Activated naive CD4-positive, alpha-beta T cell treated with anti-CD3 and anti-CD28 coated beads for 36 hours (primary cell): ENCODE measurements at regions of chr11 and their contacts with region 1.

Region 1: DNA sequence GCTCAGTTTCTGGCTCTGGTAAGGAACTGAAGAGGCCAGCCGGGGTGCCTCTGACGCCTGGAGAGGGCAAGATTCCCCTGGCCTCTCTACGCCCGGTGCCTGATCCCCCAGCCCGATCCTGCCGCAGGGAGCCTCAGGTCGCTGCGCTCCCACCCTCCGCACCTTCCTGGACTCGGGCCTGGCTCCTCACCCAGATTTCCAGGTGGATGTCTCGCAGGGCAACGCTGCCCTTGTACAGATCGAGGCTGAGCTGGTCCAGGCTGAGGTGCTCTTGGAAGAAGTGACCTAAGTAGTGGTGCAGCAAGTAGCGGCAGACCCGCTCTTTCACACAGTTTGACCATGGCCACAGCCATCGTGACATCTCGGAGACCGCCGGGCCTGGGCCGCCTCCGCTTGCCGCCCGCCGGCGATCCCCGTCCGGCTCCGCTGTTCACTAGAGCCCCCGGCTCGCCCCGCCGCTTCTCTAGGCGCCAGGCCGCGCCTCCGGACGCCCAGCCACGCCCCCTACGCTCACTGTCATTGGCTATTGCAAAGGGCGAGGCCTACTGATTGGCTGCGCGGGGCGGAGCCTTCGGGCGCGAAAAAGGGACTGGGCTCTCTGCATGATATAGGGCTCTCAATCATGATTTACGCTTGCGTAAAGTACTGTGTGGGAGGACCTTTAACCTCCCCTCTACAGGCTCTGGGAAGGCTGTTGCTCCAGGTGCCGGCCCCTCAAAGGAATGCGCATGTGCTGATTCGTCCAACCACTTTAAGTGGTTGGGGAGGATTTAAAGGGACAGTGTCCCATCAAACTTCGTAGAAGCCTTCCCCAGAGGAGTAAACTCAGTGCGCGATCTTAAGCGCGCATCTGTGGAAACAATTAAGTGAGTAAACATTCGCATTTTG is at the start of gene ATG2A:
- DNase-seq: peak; percentile 99
- H3K4me3 Mint-ChIP-seq: peak within 1 kb of the TSS; percentile 87
- H3K27ac Mint-ChIP-seq: peak within 1 kb of the TSS; percentile 81
- H3K4me1 Mint-ChIP-seq: peaks cover 25% of the 10 kb centered on the region
- H3K27me3 Mint-ChIP-seq: no peaks in the 10 kb centered on the region
- total RNA-seq, gene ATG2A: 15.1 to 16.3 TPM

Region 2: DNA sequence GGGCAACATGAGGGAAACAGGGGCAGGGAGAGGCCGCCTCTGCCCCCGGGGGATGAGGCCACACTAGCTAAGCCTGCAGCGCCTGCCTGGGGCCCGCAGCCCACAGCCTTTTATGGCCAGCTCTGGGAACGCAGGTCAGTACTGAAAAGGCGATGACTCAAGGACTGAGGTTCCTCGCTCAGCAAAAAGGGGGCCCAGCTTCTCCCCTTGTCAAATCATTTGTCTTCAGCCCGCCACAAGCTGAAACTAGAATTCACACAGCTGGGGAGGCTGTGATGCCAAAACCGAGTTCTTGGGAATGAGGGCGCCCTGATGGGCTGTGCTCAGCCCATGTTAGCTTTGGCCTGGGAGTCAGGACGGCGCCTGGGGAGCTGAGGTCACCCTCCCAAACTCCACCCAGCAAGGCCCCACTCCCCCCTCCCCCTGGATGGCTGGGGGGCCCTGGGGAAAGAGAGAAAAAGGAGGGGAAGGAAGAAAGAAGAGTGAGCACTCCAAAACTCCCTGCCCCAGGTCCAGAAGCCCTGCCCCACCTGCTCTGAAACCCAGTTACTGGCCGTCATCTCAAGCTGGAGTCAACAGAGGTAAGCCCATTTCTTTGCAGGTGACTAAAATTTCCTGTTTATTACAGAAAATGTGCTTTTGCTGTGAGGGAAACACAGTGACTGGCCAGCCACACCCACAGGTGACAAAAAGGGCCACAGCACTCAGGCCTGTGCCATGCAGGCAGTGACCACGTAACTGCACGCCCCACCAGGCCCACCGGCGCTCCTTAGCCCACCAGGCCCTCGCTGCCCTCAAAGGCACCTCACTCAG is 52.3 kb before region 1 on chr11:
- CTCF ChIA-PET with region 1: interaction called, 3 read pairs
- intact Hi-C with region 1: loop called (anchors 2 kb)
- DNase-seq: peak; percentile 84
- H3K4me3 Mint-ChIP-seq: peak overlapping the region; percentile 56
- H3K27ac Mint-ChIP-seq: peak overlapping the region; percentile 97
- H3K4me1 Mint-ChIP-seq: peaks cover 95% of the 10 kb centered on the region
- H3K27me3 Mint-ChIP-seq: no peaks in the 10 kb centered on the region

Region 3: DNA sequence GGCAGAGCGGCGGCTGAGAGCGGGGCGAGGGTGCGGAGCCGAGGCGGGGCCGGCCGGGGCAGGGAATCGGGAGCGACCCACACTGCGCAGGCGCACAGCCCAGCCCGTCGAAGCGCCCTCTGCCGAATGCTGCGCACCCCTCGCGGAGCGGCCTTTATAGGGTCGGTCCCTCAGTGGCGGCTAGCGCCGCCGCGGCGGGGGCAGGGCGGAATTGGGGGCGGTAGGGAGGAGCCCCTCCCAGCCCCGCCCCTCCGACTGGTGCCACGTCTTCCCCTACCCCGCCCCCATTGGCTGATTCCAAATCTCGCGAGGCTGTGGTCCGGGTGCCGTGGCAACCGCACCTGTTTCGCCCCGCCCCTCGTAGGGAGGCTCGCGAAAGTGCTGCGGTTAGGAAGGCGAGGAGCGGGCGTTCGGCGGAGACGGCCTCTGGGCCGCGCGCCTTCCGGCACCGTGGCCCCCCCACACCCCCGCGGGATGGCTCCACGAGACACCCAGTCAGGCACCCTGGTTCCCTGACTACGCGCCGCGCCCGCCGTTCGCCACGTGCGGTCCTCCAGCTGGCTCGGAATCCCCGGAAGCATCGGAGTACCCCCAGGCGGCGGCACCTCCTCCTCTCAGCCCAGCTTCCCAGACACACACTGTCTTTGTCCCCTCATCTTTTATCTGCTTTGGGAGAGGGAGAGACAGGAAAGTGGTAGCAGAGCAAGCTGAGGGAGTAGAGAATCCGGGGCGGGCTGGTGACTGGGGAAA is 38.4 kb before region 1 on chr11 and contains the start of gene EHD1:
- CTCF ChIA-PET with region 1: no interaction called
- intact Hi-C with region 1: loop called (anchors 2 kb)
- DNase-seq: peak; percentile 100
- H3K4me3 Mint-ChIP-seq: peak within 1 kb of the TSS; percentile 93
- H3K27ac Mint-ChIP-seq: peak within 1 kb of the TSS; percentile 96
- H3K4me1 Mint-ChIP-seq: peaks cover 58% of the 10 kb centered on the region
- H3K27me3 Mint-ChIP-seq: no peaks in the 10 kb centered on the region
- total RNA-seq, gene EHD1: 124 to 132 TPM

Region 4: GRCh38 chr11:64971421-64972233 is 54.6 kb after region 1 on chr11 and contains the start of gene MAJIN:
- CTCF ChIA-PET with region 1: interaction called, 3 read pairs
- intact Hi-C with region 1: loop called (anchors 1 kb)
- DNase-seq: peak; percentile 89
- H3K4me3 Mint-ChIP-seq: peak within 1 kb of the TSS; percentile 69
- H3K27ac Mint-ChIP-seq: peak within 1 kb of the TSS; percentile 81
- H3K4me1 Mint-ChIP-seq: peaks cover 41% of the 10 kb centered on the region
- H3K27me3 Mint-ChIP-seq: no peaks in the 10 kb centered on the region
- total RNA-seq, gene MAJIN: 0.29 to 0.37 TPM

Region 5: GRCh38 chr11:65008016-65008415 is 91.0 kb after region 1 on chr11:
- CTCF ChIA-PET with region 1: no interaction called
- intact Hi-C with region 1: loop called (anchors 1 kb)
- DNase-seq: peak; percentile 34
- H3K4me3 Mint-ChIP-seq: no peak overlapping the region
- H3K27ac Mint-ChIP-seq: no peak overlapping the region
- H3K4me1 Mint-ChIP-seq: peaks cover under 1% of the 10 kb centered on the region
- H3K27me3 Mint-ChIP-seq: no peaks in the 10 kb centered on the region

Region 6: GRCh38 chr11:65027213-65028067 is 110.4 kb after region 1 on chr11 and contains the start of gene SNX15:
- CTCF ChIA-PET with region 1: no interaction called
- intact Hi-C with region 1: loop called (anchors 1 kb)
- DNase-seq: peak; percentile 95
- H3K4me3 Mint-ChIP-seq: peak within 1 kb of the TSS; percentile 79
- H3K27ac Mint-ChIP-seq: peak within 1 kb of the TSS; percentile 82
- H3K4me1 Mint-ChIP-seq: peaks cover 19% of the 10 kb centered on the region
- H3K27me3 Mint-ChIP-seq: no peaks in the 10 kb centered on the region
- total RNA-seq, gene SNX15: 8.9 to 9.4 TPM

Region 7: GRCh38 chr11:65083834-65084597 is 167.0 kb after region 1 on chr11 and contains the starts of genes CDCA5 and ZFPL1:
- CTCF ChIA-PET with region 1: no interaction called
- intact Hi-C with region 1: loop called (anchors 5 kb)
- DNase-seq: peak; percentile 97
- H3K4me3 Mint-ChIP-seq: peak within 1 kb of the TSS; percentile 92
- H3K27ac Mint-ChIP-seq: peak within 1 kb of the TSS; percentile 97
- H3K4me1 Mint-ChIP-seq: peaks cover 39% of the 10 kb centered on the region
- H3K27me3 Mint-ChIP-seq: no peaks in the 10 kb centered on the region
- total RNA-seq, gene CDCA5: 169 to 174 TPM
- total RNA-seq, gene ZFPL1: 24.2 to 25.6 TPM

Region 8: GRCh38 chr11:65095974-65096806 is 179.2 kb after region 1 on chr11 and contains the start of gene VPS51:
- CTCF ChIA-PET with region 1: no interaction called
- intact Hi-C with region 1: no loop called
- DNase-seq: peak; percentile 90
- H3K4me3 Mint-ChIP-seq: peak within 1 kb of the TSS; percentile 94
- H3K27ac Mint-ChIP-seq: peak within 1 kb of the TSS; percentile 95
- H3K4me1 Mint-ChIP-seq: peaks cover 17% of the 10 kb centered on the region
- H3K27me3 Mint-ChIP-seq: no peaks in the 10 kb centered on the region
- total RNA-seq, gene VPS51: 90.8 to 96.0 TPM